ENCODE measurements at regions of chr17 and their contacts with region 1.

Region 1: GRCh38 chr17:36486204-36487194 is at the start of gene ZNHIT3:
- DNase-seq: peak; percentile 71 to 89
- H3K4me3 ChIP-seq: peak within 1 kb of the TSS; percentile 73 to 88 (median 85)
- H3K27ac ChIP-seq: peak within 1 kb of the TSS; percentile 53
- H3K4me1 ChIP-seq: peaks cover 0 to 11% (median 9%) of the 10 kb centered on the region in 4 experiments; a peak in 5 of 7 replicates
- H3K27me3 ChIP-seq: peaks cover 15 to 31% (median 26%) of the 10 kb centered on the region in 4 experiments
- CTCF ChIP-seq: no peak
- EP300 ChIP-seq: 0 out of 3 replicates have a peak, but pooled peaks of 1 of the 2 experiments have one; percentile 45
- POLR2A ChIP-seq: peak in 1 of 2 experiments; percentile 84; a peak in 2 of 3 replicates
- RAD21 ChIP-seq: no peak
- total RNA-seq, gene ZNHIT3: 59.1 and 60.8 TPM in 2 replicates

Region 2: GRCh38 chr17:36463916-36464315 is 22.6 kb before region 1 on chr17:
- CTCF ChIA-PET with region 1: interaction called, 17 read pairs
- POLR2A ChIA-PET with region 1: interaction called, 3 read pairs
- DNase-seq: peak; percentile 69 to 95
- H3K4me3 ChIP-seq: peak overlapping the region in 1 of 4 experiments; percentile 34; a peak in 2 of 8 replicates
- H3K27ac ChIP-seq: no peak overlapping the region
- H3K4me1 ChIP-seq: 0 out of 7 replicates have a peak, but pooled peaks cover 0 to 2% (median 0%) of the 10 kb centered on the region in 4 experiments
- H3K27me3 ChIP-seq: peaks cover 4 to 28% (median 18%) of the 10 kb centered on the region in 4 experiments
- CTCF ChIP-seq: peak in 1 of 3 experiments; percentile 9; a peak in 2 of 4 replicates
- EP300 ChIP-seq: 0 out of 3 replicates have a peak, but pooled peaks of 1 of the 2 experiments have one; percentile 8
- POLR2A ChIP-seq: no peak
- RAD21 ChIP-seq: peak in 1 of 2 experiments; percentile 15; a peak in 1 of 4 replicates

Region 3: GRCh38 chr17:36468903-36469635 is 17.4 kb before region 1 on chr17:
- CTCF ChIA-PET with region 1: interaction called, 17 read pairs
- POLR2A ChIA-PET with region 1: interaction called, 3 read pairs
- DNase-seq: no peak
- H3K4me3 ChIP-seq: no peak overlapping the region
- H3K27ac ChIP-seq: no peak overlapping the region
- H3K4me1 ChIP-seq: 0 out of 7 replicates have a peak, but pooled peaks cover 0 to 2% (median 0%) of the 10 kb centered on the region in 4 experiments
- H3K27me3 ChIP-seq: peaks cover 4 to 22% (median 16%) of the 10 kb centered on the region in 4 experiments
- CTCF ChIP-seq: no peak
- EP300 ChIP-seq: no peak
- POLR2A ChIP-seq: no peak
- RAD21 ChIP-seq: no peak

Region 4: GRCh38 chr17:36510636-36511035 is 24.1 kb after region 1 on chr17:
- CTCF ChIA-PET with region 1: interaction called, 3 read pairs
- POLR2A ChIA-PET with region 1: interaction called, 205 read pairs
- DNase-seq: no peak
- H3K4me3 ChIP-seq: no peak overlapping the region
- H3K27ac ChIP-seq: no peak overlapping the region
- H3K4me1 ChIP-seq: no peaks in the 10 kb centered on the region
- H3K27me3 ChIP-seq: no peaks in the 10 kb centered on the region
- CTCF ChIP-seq: no peak
- EP300 ChIP-seq: no peak
- POLR2A ChIP-seq: no peak
- RAD21 ChIP-seq: no peak